ENCODE measurements at regions of chr20 and their contacts with region 1.

Region 1: DNA sequence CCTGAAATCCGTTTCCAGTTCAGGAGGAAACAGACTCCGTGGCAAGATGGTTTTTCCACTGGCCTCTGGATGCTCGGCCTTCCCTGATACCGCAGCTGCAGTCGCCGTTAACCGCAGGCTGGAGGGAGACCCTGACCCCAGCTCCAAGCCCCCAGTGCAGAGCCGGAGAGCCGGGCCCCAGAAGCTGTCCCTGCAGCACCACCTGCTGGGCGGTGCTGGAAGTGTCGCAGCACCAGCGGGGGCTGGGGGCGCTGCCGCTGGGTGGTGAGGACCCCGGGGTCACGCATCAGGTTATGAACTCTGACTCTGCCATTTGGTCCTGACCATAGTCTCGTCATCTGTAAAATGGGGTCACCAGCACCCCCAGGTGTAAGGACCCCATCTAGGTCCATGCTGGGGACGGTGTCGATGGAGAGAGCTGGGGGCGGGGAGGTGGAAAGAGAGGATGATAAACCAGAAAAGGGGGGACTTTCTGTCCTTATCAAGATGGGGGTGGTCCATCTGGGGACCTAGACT is 20.7 kb upstream of the CHRNA4 start:
- DNase-seq: no peak
- ATAC-seq: peak; percentile 74
- H3K4me3 ChIP-seq: no peak overlapping the region
- H3K27ac ChIP-seq: no peak overlapping the region
- H3K4me1 ChIP-seq: no peaks in the 10 kb centered on the region
- H3K27me3 ChIP-seq: no peaks in the 10 kb centered on the region
- CTCF ChIP-seq: peak; percentile 87 to 98 (median 97)
- POLR2A ChIP-seq: no peak
- RAD21 ChIP-seq: peak; percentile 90

Region 2: DNA sequence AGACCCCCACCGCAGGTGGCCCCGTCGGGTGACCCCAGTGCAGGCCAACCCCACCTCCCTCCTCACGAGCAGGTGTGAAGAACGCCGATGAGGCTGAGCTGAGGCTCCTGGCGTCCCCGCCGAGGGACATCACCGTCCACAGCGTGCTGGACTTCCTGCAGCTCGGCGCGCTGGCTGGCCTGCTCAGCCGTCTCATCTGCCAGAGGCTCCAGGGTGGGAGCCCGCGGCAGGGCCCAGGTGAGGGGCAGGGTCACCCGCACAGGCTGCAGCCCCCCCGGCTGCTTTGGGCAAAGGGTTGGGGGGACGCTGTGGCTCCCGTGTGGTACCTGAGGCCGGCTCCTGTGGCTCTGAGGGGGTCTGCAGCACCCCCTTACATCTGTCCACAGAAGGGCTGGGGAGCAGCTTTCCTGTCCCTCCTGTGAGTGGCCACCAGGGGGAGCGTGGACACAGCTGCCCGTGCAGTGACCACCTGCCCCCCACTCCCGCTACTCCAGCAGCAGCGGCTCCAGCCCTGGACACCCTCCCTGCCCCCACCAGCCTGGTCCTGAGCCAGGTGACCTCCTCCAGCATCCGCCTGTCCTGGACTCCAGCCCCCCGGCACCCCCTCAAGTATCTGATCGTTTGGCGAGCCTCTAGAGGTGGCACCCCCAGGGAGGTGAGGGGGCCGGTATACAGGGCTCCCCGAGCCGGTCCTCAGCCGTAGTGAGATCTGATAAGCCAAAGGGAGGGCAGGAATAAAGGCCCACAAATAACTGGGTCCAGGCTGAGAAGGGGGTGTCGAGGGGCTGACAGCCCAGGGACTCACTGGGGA is 72.4 kb before region 1 on chr20:
- CTCF ChIA-PET with region 1: interaction called, 55 read pairs
- POLR2A ChIA-PET with region 1: no interaction called
- RAD21 ChIA-PET with region 1: interaction called, 5 to 9 read pairs
- intact Hi-C with region 1: loop called (anchors 1 kb)
- DNase-seq: no peak
- ATAC-seq: peak; percentile 78
- H3K4me3 ChIP-seq: no peak overlapping the region
- H3K27ac ChIP-seq: no peak overlapping the region
- H3K4me1 ChIP-seq: no peaks in the 10 kb centered on the region
- H3K27me3 ChIP-seq: 0 out of 2 replicates have a peak, but pooled peaks cover 7% of the 10 kb centered on the region
- CTCF ChIP-seq: peak; percentile 63 to 88 (median 82); a peak in 5 of 6 replicates
- POLR2A ChIP-seq: no peak
- RAD21 ChIP-seq: peak; percentile 77

Measured in HCT116 (cell line).